SK-N-SH (cell line): ENCODE measurements at regions of chr3 and their contacts with region 1.

Region 1: GRCh38 chr3:49802719-49803464 is at the start of gene INKA1:
- DNase-seq: peak; percentile 96
- H3K4me3 ChIP-seq: peak within 1 kb of the TSS; percentile 83 to 94
- H3K27ac ChIP-seq: peak within 1 kb of the TSS; percentile 31 to 98; a peak in 3 of 4 replicates
- H3K4me1 ChIP-seq: peaks cover 16 to 43% of the 10 kb centered on the region in 2 experiments
- H3K27me3 ChIP-seq: no peaks in the 10 kb centered on the region
- CTCF ChIP-seq: peak; percentile 84
- EP300 ChIP-seq: no peak
- RAD21 ChIP-seq: peak; percentile 93
- polyA plus RNA-seq, gene INKA1: 2.6 and 3.4 TPM in 2 replicates

Region 2: DNA sequence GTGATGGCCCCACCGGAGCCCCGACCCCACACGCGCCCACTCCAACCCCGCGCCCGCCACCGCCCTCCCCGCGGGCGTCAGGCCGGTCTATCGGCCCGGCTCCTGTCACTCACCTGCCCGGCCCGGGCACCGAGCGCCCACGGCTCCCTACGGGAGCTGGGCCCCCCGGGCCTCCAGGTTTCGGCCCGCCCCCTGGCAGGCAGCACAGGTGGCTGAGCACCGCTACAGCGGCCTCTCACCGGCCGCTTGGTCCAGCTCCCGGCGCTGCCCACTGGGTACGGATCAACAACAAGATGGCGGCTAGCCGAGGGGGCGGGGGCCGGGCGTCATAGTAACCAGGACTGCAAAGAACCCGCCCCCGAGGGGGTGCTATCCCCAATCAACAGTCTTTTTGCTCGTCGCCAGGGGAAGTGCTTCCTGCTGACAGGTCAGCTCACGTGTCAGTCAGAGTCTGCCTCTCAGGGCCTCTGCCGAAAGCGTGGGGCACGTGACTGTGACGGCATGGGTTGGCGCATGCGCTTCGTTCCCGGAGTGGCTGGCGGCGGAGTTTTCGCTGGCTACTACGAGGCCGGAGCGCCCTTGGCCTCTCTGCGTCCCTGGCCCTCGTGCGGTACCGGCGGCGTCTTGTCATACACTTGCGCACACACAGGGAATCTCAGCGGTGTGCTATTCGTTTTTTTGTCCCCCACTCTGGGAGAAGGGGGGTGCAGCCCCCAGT is 16.5 kb before region 1 on chr3 and contains the start of gene IP6K1:
- CTCF ChIA-PET with region 1: interaction called, 23 read pairs
- POLR2A ChIA-PET with region 1: no interaction called
- DNase-seq: peak; percentile 100
- H3K4me3 ChIP-seq: peak within 1 kb of the TSS; percentile 68 to 96
- H3K27ac ChIP-seq: peak within 1 kb of the TSS; percentile 70 to 85
- H3K4me1 ChIP-seq: peaks cover 5 to 6% of the 10 kb centered on the region in 2 experiments; a peak in 1 of 4 replicates
- H3K27me3 ChIP-seq: no peaks in the 10 kb centered on the region
- CTCF ChIP-seq: no peak
- EP300 ChIP-seq: no peak
- RAD21 ChIP-seq: no peak
- polyA plus RNA-seq, gene IP6K1: 17.0 and 23.3 TPM in 2 replicates

Region 3: DNA sequence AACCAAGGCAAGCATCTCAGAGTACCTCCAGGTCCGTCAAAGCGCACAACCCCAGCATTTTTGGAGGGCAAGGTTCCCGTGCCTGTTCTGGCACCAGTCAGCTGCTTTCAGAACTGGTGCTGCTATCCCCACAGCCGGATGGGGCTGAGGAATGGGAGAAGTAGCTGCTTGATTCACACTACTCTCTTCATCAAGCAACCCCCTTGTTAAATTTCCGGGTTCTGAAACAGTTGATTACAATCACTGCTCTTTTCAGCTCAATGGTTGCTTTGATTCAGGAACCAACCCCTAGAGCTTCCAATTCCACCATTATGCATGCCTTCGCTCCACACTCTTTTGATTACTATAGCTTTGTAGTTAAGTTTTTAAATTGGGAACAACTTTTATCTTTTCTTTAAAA is 23.1 kb after region 1 on chr3:
- CTCF ChIA-PET with region 1: interaction called, 386 read pairs
- POLR2A ChIA-PET with region 1: interaction called, 6 read pairs
- DNase-seq: no peak
- H3K4me3 ChIP-seq: no peak overlapping the region
- H3K27ac ChIP-seq: no peak overlapping the region
- H3K4me1 ChIP-seq: no peaks in the 10 kb centered on the region
- H3K27me3 ChIP-seq: no peaks in the 10 kb centered on the region
- CTCF ChIP-seq: no peak
- EP300 ChIP-seq: no peak
- RAD21 ChIP-seq: no peak

Region 4: GRCh38 chr3:49867871-49868321 is 65.0 kb after region 1 on chr3:
- CTCF ChIA-PET with region 1: interaction called, 15 read pairs
- POLR2A ChIA-PET with region 1: no interaction called
- DNase-seq: no peak
- H3K4me3 ChIP-seq: no peak overlapping the region
- H3K27ac ChIP-seq: no peak overlapping the region
- H3K4me1 ChIP-seq: peaks cover 0 to 35% of the 10 kb centered on the region in 2 experiments; a peak in 1 of 4 replicates
- H3K27me3 ChIP-seq: peaks cover 41% of the 10 kb centered on the region
- CTCF ChIP-seq: no peak
- EP300 ChIP-seq: no peak
- RAD21 ChIP-seq: no peak

Region 5: GRCh38 chr3:49929331-49930240 is 126.7 kb after region 1 on chr3 and contains the start of gene MON1A:
- CTCF ChIA-PET with region 1: interaction called, 13 read pairs
- POLR2A ChIA-PET with region 1: interaction called, 3 read pairs
- DNase-seq: peak; percentile 93
- H3K4me3 ChIP-seq: peak within 1 kb of the TSS; percentile 63 to 80
- H3K27ac ChIP-seq: peak within 1 kb of the TSS; percentile 59 to 76; a peak in 3 of 4 replicates
- H3K4me1 ChIP-seq: peaks cover 0 to 10% of the 10 kb centered on the region in 2 experiments; a peak in 1 of 4 replicates
- H3K27me3 ChIP-seq: no peaks in the 10 kb centered on the region
- CTCF ChIP-seq: peak; percentile 53
- EP300 ChIP-seq: no peak
- RAD21 ChIP-seq: no peak
- polyA plus RNA-seq, gene MON1A: 10.9 and 12.0 TPM in 2 replicates

Region 6: GRCh38 chr3:50057756-50058155 is 254.9 kb after region 1 on chr3:
- CTCF ChIA-PET with region 1: no interaction called
- POLR2A ChIA-PET with region 1: no interaction called
- DNase-seq: no peak
- H3K4me3 ChIP-seq: no peak overlapping the region
- H3K27ac ChIP-seq: no peak overlapping the region
- H3K4me1 ChIP-seq: no peaks in the 10 kb centered on the region
- H3K27me3 ChIP-seq: no peaks in the 10 kb centered on the region
- CTCF ChIP-seq: no peak
- EP300 ChIP-seq: no peak
- RAD21 ChIP-seq: no peak